ENCODE measurements at regions of chr3 and their contacts with region 1.

Region 1: DNA sequence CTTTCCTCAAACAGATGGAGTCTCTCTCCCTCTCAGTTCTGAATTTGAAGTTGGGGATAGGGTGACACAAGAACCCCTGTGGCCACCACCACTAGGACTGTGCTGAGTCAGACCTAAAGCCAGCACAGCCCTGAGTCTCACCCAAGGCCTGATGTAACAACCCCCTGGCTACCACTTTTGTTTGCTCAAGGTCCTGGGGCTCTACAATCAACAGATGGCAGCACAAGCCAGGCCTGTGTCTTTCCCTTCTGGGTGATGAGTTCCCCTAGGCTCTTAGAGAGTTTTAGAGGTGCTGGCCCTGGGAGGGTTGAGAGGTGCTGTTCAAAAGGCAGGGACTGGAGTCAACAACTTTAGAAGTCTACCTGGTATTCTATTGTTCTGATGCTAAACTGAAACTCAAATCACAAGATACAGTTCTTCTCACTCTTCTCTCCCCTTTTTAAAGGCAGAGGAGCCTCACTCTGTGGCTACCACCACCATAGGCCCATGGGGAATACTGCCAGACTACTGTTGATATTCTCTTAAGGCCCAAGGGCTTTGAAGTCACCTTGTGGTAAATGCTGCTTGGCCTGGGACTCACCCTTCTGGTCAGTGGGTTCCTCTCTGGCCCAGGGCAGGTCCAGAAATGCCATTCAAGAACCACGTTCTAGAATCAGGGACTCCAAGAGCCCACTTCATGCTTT is 6.5 kb downstream of the OR5K4 start:
- DNase-seq: no peak
- ATAC-seq: no peak
- H3K4me3 Mint-ChIP-seq: no peak overlapping the region
- H3K27ac Mint-ChIP-seq: no peak overlapping the region
- H3K4me1 Mint-ChIP-seq: no peaks in the 10 kb centered on the region
- H3K27me3 Mint-ChIP-seq: no peaks in the 10 kb centered on the region
- CTCF ChIP-seq: no peak

Region 2: DNA sequence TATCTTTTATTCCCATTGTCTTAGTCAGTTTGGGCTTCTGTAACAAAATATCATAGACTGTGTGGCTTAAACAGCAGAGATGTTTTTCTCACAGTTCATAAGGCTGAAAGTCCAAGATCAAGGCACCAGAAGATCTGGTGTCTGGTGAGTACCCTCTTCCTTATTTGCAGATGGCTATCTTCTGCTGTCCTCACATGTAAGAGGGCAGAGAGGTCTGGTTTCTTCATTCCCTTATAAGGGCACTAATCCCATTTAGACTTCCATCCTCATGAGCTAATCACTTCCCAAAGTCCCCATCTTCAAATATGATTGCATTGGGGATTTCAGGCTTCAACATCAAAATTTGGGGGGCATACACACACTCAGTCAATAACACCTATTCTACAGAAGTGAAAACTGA is 1148.8 kb before region 1 on chr3:
- CTCF ChIA-PET with region 1: no interaction called
- POLR2A ChIA-PET with region 1: no interaction called
- intact Hi-C with region 1: no loop called
- DNase-seq: no peak
- ATAC-seq: no peak
- H3K4me3 Mint-ChIP-seq: no peak overlapping the region
- H3K27ac Mint-ChIP-seq: no peak overlapping the region
- H3K4me1 Mint-ChIP-seq: no peaks in the 10 kb centered on the region
- H3K27me3 Mint-ChIP-seq: no peaks in the 10 kb centered on the region
- CTCF ChIP-seq: no peak

Region 3: GRCh38 chr3:98483130-98483482 is 123.0 kb after region 1 on chr3:
- CTCF ChIA-PET with region 1: no interaction called
- POLR2A ChIA-PET with region 1: no interaction called
- intact Hi-C with region 1: loop called (anchors 10 kb)
- DNase-seq: no peak
- ATAC-seq: no peak
- H3K4me3 Mint-ChIP-seq: no peak overlapping the region
- H3K27ac Mint-ChIP-seq: no peak overlapping the region
- H3K4me1 Mint-ChIP-seq: no peaks in the 10 kb centered on the region
- H3K27me3 Mint-ChIP-seq: peaks cover 26% of the 10 kb centered on the region
- CTCF ChIP-seq: no peak

Measured in activated B cell treated with CpG ODN at 0.5 μM for 24 hours (primary cell).